Adrenal gland (tissue), 19 donors: ENCODE measurements at regions of chr4 and their contacts with region 1.

Region 1: DNA sequence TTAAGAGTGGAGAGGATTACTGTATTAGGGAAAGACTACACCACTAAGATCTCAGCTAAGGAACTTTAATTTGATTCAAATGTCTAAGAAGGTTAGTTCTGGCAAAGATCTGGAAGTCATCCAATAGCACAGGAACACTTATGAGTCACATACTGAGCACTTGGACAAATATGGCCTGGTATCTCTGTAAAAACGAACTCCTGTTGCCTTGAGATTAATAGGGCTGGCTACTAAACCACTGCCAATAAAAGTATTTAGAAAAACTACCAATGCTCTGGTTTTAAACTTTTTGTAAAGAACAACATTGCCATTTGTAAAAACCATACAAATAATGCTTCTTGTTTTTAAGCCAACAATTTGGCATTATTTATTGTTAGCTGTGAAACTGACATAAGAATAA is 70.5 kb downstream of the SEC24D start:
- DNase-seq: peak in 2 of 7 donors; percentile 43 to 49
- H3K4me3 ChIP-seq: no peak overlapping the region
- H3K27ac ChIP-seq: peak overlapping the region in 3 of 5 donors; percentile 1 to 41 (median 24)
- H3K4me1 ChIP-seq: peaks cover 20 to 58% of the 10 kb centered on the region in 2 donors
- H3K27me3 ChIP-seq: no peaks in the 10 kb centered on the region
- CTCF ChIP-seq: no peak
- POLR2A ChIP-seq: no peak

Region 2: GRCh38 chr4:118410138-118410537 is 355.3 kb before region 1 on chr4:
- intact Hi-C with region 1: no loop called
- DNase-seq: no peak
- H3K4me3 ChIP-seq: no peak overlapping the region
- H3K27ac ChIP-seq: no peak overlapping the region
- H3K4me1 ChIP-seq: no peaks in the 10 kb centered on the region
- H3K27me3 ChIP-seq: no peaks in the 10 kb centered on the region
- CTCF ChIP-seq: no peak
- POLR2A ChIP-seq: no peak

Region 3: DNA sequence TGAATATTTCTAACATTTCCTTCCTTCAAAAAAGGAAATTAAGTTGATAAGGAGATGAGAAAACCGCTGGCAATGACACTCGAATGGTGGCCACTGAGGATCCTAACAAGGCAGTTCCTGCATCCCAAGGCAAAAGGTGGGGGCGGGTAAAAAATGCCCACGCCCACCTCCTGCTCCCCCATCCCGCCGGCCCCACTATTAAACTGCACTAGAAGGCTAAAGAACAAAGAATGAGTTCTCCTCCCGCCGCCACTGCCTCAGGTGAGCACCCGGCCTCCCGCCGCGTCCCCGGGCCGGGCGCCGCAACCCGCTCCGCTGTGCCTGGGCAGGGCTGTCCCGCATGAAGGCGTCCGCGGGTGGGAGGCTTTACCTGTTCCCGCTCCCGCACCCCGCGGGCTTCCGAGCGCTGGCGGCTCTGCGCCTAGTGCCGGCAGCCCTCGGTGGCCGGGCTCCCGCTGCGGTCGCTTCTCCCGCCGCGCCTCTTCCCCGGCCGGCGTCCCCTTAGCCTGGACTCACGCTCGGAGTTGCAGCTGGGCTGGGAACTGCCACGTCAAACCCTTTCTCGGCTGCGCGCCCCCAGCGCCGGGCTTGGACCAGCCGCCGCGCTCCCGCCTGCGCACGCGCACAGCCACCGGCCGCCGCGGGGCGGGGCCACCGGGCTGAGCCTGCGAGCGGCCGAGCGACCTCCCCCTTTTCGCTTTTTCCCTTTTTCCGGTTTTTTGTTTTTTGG is 70.3 kb after region 1 on chr4 and contains the start of gene SEC24D:
- intact Hi-C with region 1: no loop called
- DNase-seq: peak; percentile 87 to 92 (median 90)
- H3K4me3 ChIP-seq: peak within 1 kb of the TSS; percentile 52 to 99 (median 85)
- H3K27ac ChIP-seq: peak within 1 kb of the TSS; percentile 74 to 99 (median 95)
- H3K4me1 ChIP-seq: peaks cover 0 to 30% of the 10 kb centered on the region in 2 donors
- H3K27me3 ChIP-seq: no peaks in the 10 kb centered on the region
- CTCF ChIP-seq: peak in 3 of 6 experiments; percentile 14 to 23 (median 21)
- POLR2A ChIP-seq: peak; percentile 85 to 89
- total RNA-seq, gene SEC24D: 25.5 to 76.7 (median 34.4) TPM

Region 4: DNA sequence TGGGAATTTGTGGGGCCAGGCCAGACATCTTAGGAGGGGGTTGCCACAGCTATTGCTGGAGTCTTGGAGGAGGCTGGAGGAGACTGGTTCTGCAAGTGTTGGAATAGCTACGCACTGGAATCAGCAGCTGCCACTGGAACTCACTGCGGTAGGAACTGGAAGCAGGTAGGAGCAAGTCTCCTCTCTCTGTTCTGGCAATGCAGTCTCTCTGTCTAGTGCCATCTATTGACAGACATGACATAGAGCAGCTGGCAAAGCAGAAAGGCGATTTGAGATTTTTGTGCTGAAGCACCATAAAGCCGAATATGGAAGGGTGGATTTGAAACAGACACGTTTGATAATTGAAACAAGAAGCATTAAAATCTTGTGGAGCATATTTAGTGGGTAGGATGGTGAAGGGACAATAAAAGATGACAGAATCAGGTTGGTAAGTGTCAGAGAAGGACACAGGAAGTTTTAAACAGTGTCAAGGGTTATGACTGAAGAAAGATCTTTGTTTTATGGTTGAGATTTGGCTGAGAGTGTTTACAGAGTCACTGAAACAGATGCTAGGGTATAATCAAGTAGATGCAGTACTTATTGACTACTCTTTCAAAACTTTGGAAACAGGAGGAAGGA is 99.8 kb after region 1 on chr4:
- intact Hi-C with region 1: loop called in 1 of 2 experiments (anchors 10 kb)
- DNase-seq: peak; percentile 37 to 70 (median 49)
- H3K4me3 ChIP-seq: no peak overlapping the region
- H3K27ac ChIP-seq: no peak overlapping the region
- H3K4me1 ChIP-seq: no peaks in the 10 kb centered on the region
- H3K27me3 ChIP-seq: peaks cover 5% of the 10 kb centered on the region
- CTCF ChIP-seq: peak; percentile 55 to 69 (median 63)
- POLR2A ChIP-seq: no peak

Region 5: GRCh38 chr4:118941149-118941548 is 175.8 kb after region 1 on chr4:
- intact Hi-C with region 1: no loop called
- DNase-seq: peak in 4 of 7 donors; percentile 21 to 42 (median 25)
- H3K4me3 ChIP-seq: no peak overlapping the region
- H3K27ac ChIP-seq: peak overlapping the region in 1 of 5 donors; percentile 15
- H3K4me1 ChIP-seq: no peaks in the 10 kb centered on the region
- H3K27me3 ChIP-seq: no peaks in the 10 kb centered on the region
- CTCF ChIP-seq: no peak
- POLR2A ChIP-seq: no peak

Region 6: GRCh38 chr4:118968005-118968404 is 202.6 kb after region 1 on chr4:
- intact Hi-C with region 1: loop called in 1 of 2 experiments (anchors 10 kb)
- DNase-seq: peak; percentile 34 to 82 (median 58)
- H3K4me3 ChIP-seq: no peak overlapping the region
- H3K27ac ChIP-seq: peak overlapping the region; percentile 8 to 64 (median 37)
- H3K4me1 ChIP-seq: peaks cover 9 to 26% of the 10 kb centered on the region in 2 donors
- H3K27me3 ChIP-seq: no peaks in the 10 kb centered on the region
- CTCF ChIP-seq: no peak
- POLR2A ChIP-seq: no peak